ENCODE measurements at regions of chr5 and their contacts with region 1.

Region 1: DNA sequence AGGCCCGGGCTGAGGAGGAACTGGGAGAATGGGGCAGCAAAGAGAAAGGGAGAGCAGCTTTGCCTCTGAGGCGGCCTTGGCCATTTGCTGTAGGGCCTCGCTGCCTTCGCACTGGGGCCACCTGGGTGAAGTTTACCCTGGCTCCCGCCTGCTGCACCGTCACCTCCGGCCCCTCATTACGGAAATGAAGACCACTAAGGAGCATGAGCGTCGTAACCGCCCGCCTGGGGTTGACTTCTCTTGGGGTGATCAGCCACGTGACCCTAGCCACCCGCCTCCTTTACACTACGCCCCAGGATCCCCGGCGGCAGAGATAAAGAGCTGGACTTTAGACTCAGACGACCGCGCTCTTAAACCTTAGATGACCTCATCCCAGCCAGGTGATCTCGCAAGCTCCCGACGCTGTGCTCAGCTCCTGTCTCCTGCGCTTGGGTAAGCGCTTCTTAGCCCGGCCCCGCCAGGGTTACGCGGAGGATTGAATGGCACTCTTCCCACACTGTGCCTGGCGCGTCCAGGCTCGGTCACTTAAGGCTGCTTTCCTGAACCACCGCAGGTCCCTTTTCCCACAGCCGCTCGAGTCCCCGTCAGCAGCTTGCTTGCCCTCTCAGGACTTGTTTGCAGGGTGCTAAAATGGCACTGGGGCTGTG is 107.9 kb upstream of the LARP1 start:
- DNase-seq: no peak
- H3K4me3 ChIP-seq: peak overlapping the region; percentile 34 to 53 (median 40)
- H3K27ac ChIP-seq: no peak overlapping the region
- H3K4me1 ChIP-seq: peaks cover 9 to 14% (median 12%) of the 10 kb centered on the region in 4 donors
- H3K27me3 ChIP-seq: peaks cover 0 to 12% (median 0%) of the 10 kb centered on the region in 4 donors
- CTCF ChIP-seq: no peak
- EP300 ChIP-seq: no peak
- POLR2A ChIP-seq: no peak

Region 2: DNA sequence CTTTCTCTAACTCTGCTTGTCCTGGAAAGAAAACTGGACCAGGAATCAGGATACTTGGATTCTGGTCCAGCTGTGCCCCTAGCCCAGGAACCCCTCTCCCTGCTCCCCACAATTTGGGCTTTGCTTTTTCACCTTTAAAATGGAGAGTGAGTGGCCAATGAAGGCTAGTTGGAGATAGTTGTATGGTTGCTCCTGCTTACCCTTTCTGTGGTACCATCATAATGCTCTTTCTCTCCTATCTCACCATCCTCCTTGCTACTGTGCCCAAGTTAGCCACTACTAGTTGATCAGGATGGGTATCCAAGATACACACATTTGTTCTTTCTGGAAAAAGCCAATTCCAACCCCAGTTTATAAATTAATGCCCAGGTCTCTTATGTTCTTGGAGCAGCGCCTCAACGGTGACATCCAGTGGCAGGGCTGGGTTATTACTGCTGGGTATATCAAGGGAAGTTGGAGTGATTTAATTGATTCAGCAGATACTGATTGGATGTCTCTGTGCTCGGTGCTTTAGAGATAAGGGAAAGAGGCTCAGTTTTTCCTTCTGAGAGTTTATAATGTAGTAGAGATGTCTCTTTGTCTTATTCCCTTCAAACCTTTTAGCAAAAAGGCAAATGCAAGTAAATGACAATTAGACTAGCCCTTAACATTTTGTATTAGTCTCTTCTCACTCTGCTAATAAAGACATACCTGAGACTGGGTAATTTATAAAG is 164.6 kb after region 1 on chr5:
- intact Hi-C with region 1: loop called (anchors 2 kb)
- DNase-seq: no peak
- H3K4me3 ChIP-seq: no peak overlapping the region
- H3K27ac ChIP-seq: peak overlapping the region in 2 of 4 donors; percentile 8 to 55
- H3K4me1 ChIP-seq: peaks cover 0 to 19% (median 2%) of the 10 kb centered on the region in 4 donors
- H3K27me3 ChIP-seq: no peaks in the 10 kb centered on the region
- CTCF ChIP-seq: peak; percentile 84 to 93 (median 87)
- EP300 ChIP-seq: no peak
- POLR2A ChIP-seq: no peak

Measured in esophagus muscularis mucosa (tissue), 4 donors.